ENCODE measurements at regions of chr3 and their contacts with region 1.

Region 1: DNA sequence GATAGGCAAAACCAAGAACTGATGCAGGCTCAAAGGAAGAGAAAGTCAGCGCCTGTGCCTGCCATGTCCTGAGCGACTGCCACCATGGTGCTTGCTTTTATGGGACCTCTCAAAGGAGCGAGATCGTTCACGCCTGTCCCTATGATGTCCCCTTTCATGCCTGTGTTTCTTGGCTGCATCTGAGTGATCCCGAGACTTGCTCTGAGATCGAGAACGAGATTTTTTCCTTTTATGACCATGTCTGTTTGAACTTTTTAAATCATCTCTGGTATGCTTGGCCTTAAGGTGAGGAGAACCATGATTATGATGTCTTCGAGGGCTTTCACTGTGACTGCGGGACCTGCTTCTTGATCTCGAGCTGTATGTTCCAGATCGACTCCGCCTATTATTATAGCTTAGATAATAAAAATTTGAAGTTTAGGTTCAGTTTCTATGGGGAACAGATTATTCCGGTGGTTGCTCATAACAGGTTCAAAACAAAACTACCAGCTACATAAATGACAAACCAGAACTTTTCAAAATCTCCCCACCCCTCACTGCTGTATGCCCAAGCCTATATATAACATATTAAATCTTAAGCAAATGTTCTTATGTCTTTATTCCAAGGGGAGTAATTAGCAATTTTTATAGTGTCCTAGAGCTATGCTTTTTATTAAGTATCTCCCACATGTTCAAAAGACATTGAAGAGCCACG is 11.6 kb downstream of the CCNL1 start:
- DNase-seq: no peak
- ATAC-seq: peak in 3 of 4 experiments; percentile 17 to 40 (median 19)
- H3K4me3 ChIP-seq: no peak overlapping the region
- H3K4me3 Mint-ChIP-seq: no peak overlapping the region
- H3K27ac ChIP-seq: no peak overlapping the region
- H3K27ac Mint-ChIP-seq: peak overlapping the region; percentile 56 to 73
- H3K4me1 ChIP-seq: peaks cover 0 to 4% of the 10 kb centered on the region in 2 experiments
- H3K4me1 Mint-ChIP-seq: peaks cover 27 to 43% (median 37%) of the 10 kb centered on the region in 3 donors
- H3K27me3 ChIP-seq: no peaks in the 10 kb centered on the region
- H3K27me3 Mint-ChIP-seq: no peaks in the 10 kb centered on the region

Region 2: DNA sequence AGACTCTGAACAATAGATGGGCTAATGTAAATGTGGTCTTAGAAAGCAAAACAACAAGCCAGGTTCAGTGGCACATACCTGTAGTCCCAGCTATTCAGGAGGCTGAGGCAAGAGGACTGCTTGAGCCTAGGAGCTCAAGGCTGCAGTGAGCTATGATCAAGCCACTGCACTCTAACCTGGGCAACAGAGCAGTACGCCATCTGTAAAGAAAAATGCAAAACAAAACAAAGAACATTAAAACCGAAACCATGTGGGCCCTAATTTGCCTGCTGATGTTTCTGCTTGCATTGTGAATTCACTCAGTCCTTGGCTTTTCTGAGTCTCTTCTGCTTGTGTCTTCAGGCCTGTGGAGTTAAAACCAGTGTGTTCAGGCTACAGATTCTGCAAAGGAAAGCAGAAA is 45.1 kb before region 1 on chr3:
- CTCF ChIA-PET with region 1: no interaction called
- POLR2A ChIA-PET with region 1: interaction called in 1 of 2 experiments, 14 read pairs
- DNase-seq: peak in 1 of 35 experiments; percentile 25
- ATAC-seq: peak in 1 of 4 experiments; percentile 19
- H3K4me3 ChIP-seq: no peak overlapping the region
- H3K4me3 Mint-ChIP-seq: no peak overlapping the region
- H3K27ac ChIP-seq: no peak overlapping the region
- H3K27ac Mint-ChIP-seq: peak overlapping the region; percentile 79 to 85
- H3K4me1 ChIP-seq: peaks cover 0 to 23% of the 10 kb centered on the region in 2 experiments
- H3K4me1 Mint-ChIP-seq: peaks cover 7 to 26% (median 24%) of the 10 kb centered on the region in 3 donors
- H3K27me3 ChIP-seq: no peaks in the 10 kb centered on the region
- H3K27me3 Mint-ChIP-seq: no peaks in the 10 kb centered on the region

Region 3: DNA sequence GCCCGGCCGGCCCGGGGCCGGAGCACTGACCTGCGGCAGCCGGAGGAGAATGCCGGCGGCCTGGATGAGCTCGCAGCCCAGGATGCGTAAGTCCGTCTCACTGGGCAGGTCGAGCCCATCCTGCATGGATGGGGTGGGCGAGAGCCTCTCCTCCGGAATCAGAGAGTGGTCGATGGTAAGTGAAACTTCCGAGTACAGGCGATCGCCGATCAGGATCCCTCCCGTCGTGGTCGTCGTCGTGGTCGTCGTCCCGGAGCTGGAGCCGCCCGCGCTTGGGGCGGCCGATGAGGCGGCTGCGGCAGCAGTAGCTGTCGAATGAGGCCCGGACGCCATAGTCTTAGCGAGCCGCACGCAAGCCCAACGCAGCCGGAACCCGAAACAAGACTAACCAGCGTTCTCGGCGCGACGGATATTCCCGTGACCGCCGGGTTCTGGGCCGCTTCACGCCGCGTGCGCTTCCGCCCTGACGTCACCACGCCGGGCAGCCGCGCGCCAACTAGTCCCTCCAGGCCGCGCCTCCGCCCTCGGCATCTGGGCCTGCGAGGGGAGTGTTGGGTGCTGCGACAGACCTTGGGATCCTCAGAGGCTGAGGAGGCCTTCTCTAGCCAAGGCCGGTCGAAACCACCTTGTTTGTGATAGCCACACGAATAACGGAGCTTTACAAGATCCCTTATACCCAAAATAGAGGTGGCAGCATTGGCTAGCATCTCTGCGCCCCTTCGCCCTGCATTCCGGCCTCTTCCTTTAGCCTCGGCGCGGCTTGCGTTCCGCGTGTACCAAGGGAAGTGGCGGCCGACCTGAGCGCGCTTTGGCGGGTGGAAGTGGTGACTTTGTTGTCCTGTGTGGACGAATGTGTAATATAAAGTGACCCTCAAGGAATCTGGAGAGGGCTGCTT is 11.7 kb after region 1 on chr3 and contains the start of gene CCNL1:
- CTCF ChIA-PET with region 1: interaction called, 3 to 5 read pairs
- POLR2A ChIA-PET with region 1: interaction called, 15 to 27 read pairs
- DNase-seq: peak; percentile 90 to 99 (median 95)
- ATAC-seq: peak; percentile 76 to 83 (median 82)
- H3K4me3 ChIP-seq: peak within 1 kb of the TSS; percentile 95 to 99
- H3K4me3 Mint-ChIP-seq: peak within 1 kb of the TSS; percentile 87 to 99 (median 93)
- H3K27ac ChIP-seq: peak within 1 kb of the TSS; percentile 98
- H3K27ac Mint-ChIP-seq: peak within 1 kb of the TSS; percentile 99 to 100
- H3K4me1 ChIP-seq: peaks cover 21 to 47% of the 10 kb centered on the region in 2 experiments
- H3K4me1 Mint-ChIP-seq: peaks cover 50 to 55% (median 54%) of the 10 kb centered on the region in 3 donors
- H3K27me3 ChIP-seq: no peaks in the 10 kb centered on the region
- H3K27me3 Mint-ChIP-seq: no peaks in the 10 kb centered on the region
- total RNA-seq, gene CCNL1: 271 to 1,140 (median 276) TPM